ENCODE measurements at regions of chr14 and their contacts with region 1.

Region 1: GRCh38 chr14:48398675-48399282 is 723.4 kb upstream of the MDGA2 start:
- DNase-seq: no peak
- ATAC-seq: no peak

Region 2: GRCh38 chr14:47929334-47929733 is 469.4 kb before region 1 on chr14:
- intact Hi-C with region 1: loop called (anchors 10 kb)
- DNase-seq: no peak
- ATAC-seq: no peak